Cardiac septum (tissue), 1 donor: ENCODE measurements at regions of chr1 and their contacts with region 1.

Region 1: GRCh38 chr1:172398970-172399755 is 21.3 kb upstream of the C1orf105 start:
- DNase-seq: no peak

Region 2: DNA sequence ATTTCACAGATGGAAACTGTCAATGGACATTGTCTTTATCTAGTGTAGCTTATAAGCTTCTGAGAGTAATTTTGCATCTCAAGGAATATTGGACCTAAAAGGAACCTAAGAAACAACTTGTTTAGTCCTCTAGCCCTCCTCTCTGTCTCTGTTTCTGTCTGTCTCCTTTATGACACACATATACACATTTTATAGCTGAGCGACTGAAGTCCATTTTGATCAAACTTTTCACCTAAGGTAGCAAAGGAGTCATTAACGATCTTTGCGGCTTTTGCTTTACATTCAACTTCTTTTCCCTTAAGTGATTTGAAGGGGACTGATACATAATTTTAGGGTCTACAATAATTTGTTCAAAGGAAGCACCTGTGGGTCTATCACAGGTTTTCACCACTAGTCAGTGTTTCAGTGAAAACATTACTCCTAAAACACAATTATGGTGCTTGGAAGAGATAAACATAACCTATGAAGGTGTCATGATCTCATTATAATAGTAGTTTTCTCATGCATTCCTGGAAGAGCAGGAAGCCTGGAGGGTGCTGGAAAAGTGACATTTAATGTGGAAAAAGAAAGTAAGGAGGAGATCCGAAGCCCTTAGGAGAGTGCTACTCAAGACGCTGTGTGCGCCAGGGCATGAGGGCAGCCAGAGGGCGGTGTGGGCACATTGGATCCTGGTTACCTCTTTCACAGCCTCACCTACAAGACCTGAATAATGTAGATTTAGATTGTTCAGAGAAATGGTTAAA is 309.2 kb before region 1 on chr1:
- intact Hi-C with region 1: loop called (anchors 1 kb)
- DNase-seq: peak; percentile 75

Region 3: DNA sequence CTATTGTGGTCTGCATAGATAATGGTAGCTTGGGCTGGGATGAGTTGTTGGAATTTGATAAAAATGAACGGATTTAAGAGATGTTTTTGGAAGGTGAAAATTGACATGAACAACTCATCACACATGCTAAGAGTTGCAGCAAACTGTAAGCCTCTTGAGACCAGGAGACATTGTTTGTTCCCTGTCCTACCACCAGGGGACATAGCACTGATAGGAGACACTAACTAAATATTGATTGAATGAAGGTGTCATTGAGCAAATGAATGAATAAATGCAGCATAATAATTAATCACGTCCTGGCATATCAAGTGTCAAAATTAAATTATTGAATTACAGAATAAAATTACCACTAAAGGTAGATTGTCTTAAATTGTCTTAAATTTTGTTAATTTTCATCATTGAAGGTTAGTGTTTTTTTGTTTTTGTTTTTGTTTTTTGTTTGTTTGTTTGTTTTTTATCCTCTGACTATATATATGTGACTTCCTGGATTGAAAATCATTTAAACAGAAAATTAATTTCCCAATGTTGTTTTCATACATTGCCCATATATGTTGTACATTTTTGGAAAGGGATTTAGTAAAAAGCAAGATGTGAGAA is 264.0 kb before region 1 on chr1:
- intact Hi-C with region 1: loop called (anchors 5 kb)
- DNase-seq: no peak

Region 4: DNA sequence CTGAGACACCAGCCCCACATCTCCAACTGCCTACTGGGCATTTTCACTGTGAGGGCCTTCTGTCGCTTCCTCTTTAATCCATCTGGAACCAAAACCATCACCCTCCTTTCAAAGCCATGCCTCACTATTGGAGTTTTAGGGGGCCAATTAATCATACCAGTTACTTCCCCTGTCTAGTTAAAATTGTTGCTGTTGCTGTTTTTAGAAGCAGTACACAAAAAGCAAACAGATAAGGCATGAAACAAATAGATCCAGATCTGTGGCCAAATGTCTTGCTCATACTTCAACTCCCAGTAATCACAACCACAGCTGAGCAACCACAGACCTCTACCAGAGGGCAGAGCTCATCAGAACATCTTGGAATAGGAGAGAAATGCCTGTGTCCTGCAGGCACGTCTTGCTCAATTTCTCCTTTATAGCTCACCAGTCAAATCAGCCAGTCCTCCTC is 112.5 kb before region 1 on chr1:
- intact Hi-C with region 1: loop called (anchors 10 kb)
- DNase-seq: no peak

Region 5: DNA sequence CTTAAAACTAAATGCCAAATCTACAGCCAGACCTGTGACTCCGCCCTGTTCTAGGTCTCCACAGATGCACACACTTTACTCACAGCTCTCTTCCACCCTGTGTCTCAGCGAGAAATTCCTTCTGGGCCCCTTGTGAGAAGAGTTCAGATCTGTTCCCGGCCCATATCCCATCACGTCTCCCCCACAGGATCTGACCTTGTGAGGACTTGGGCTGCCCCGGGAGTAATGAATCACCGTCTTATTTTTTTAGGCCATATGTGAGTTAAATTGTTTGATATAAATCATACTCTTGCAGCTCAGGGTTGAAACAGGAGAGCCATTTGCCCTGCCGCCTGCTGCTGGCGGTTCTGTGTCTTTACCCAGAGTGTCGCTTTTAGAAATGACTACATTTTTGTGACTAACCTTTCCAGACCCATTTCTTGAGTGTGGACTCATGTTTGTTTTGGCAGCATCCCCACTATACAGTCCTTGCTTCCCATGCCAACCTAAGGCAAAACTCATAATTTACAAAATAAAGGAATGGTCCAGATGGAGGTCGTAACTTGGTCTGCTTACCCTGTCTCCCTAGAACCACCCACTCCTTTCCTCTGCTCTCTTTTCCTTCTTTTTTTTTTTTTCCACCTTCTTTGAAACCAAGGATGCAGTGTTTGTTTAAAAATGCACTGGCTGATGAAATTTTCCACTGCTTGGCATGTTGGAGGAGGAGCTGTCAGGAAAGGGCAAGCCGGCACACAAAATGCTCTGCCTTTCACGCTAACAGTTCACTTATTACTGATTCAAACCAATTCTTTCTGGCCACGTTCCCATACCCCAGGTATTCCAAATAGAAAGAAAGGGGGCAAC is 76.7 kb before region 1 on chr1:
- intact Hi-C with region 1: loop called (anchors 2 kb)
- DNase-seq: no peak

Region 6: DNA sequence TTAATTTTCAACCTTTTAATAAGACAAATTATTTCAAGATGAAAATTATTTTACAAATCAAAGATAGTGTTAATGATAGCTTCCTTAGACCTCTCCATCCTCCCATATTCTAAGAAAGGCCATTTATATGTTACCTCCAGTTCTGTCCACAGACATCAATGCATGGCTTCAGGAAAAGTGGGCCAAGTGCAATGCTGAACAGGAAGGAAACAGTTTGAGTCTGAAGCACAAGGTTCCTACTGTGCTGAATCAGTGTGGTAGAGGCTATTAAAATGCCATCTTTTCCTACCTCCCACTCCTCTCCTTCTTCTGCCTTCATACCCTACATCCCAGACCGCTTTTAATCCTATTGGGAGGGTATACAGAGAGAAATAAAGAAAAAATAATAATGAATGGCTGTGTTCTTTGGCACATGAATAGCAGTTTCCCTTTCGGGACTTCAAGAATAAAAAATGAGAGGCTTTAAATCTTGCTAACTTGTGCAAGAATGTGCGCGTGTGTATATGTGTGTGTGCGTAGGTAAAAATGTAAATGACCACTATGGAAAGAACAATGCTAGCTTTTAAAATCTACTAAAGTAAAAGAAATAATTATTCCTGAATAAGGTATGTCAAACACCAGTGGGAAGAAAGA is 41.3 kb before region 1 on chr1:
- intact Hi-C with region 1: loop called (anchors 2 kb)
- DNase-seq: no peak

Region 7: GRCh38 chr1:172411791-172412338 is 12.7 kb after region 1 on chr1:
- intact Hi-C with region 1: loop called (anchors 1 kb)
- DNase-seq: no peak